PC-3 (cell line): ENCODE measurements at regions of chr5 and their contacts with region 1.

Region 1: GRCh38 chr5:15887093-15887492 is 292.5 kb downstream of the MARCHF11 start:
- DNase-seq: no peak
- ATAC-seq: no peak
- H3K4me3 ChIP-seq: no peak overlapping the region
- H3K27ac ChIP-seq: no peak overlapping the region
- H3K4me1 ChIP-seq: no peaks in the 10 kb centered on the region
- H3K27me3 ChIP-seq: no peaks in the 10 kb centered on the region
- CTCF ChIP-seq: no peak

Region 2: GRCh38 chr5:15550502-15551112 is 336.5 kb before region 1 on chr5:
- CTCF ChIA-PET with region 1: no interaction called
- POLR2A ChIA-PET with region 1: no interaction called
- intact Hi-C with region 1: no loop called
- DNase-seq: no peak
- ATAC-seq: no peak
- H3K4me3 ChIP-seq: no peak overlapping the region
- H3K27ac ChIP-seq: no peak overlapping the region
- H3K4me1 ChIP-seq: no peaks in the 10 kb centered on the region
- H3K27me3 ChIP-seq: no peaks in the 10 kb centered on the region
- CTCF ChIP-seq: no peak

Region 3: GRCh38 chr5:15929611-15930263 is 42.6 kb after region 1 on chr5:
- CTCF ChIA-PET with region 1: no interaction called
- POLR2A ChIA-PET with region 1: no interaction called
- intact Hi-C with region 1: loop called (anchors 2 kb)
- DNase-seq: no peak
- ATAC-seq: no peak
- H3K4me3 ChIP-seq: no peak overlapping the region
- H3K27ac ChIP-seq: no peak overlapping the region
- H3K4me1 ChIP-seq: no peaks in the 10 kb centered on the region
- H3K27me3 ChIP-seq: no peaks in the 10 kb centered on the region
- CTCF ChIP-seq: no peak